Activated T-helper 1 cell treated with anti-CD3 and anti-CD28 coated beads, Interleukin-12 subunit alpha, Interleukin-12 subunit beta, Interleukin-2, Interleukin-4 antibody, amounts not matched to agents 30 ng/mL and 10 ng/mL and 1 ng/mL, durations not matched to agents 14 hours and 24 hours and 36 hours (primary cell): ENCODE measurements at regions of chr10 and their contacts with region 1.

Region 1: DNA sequence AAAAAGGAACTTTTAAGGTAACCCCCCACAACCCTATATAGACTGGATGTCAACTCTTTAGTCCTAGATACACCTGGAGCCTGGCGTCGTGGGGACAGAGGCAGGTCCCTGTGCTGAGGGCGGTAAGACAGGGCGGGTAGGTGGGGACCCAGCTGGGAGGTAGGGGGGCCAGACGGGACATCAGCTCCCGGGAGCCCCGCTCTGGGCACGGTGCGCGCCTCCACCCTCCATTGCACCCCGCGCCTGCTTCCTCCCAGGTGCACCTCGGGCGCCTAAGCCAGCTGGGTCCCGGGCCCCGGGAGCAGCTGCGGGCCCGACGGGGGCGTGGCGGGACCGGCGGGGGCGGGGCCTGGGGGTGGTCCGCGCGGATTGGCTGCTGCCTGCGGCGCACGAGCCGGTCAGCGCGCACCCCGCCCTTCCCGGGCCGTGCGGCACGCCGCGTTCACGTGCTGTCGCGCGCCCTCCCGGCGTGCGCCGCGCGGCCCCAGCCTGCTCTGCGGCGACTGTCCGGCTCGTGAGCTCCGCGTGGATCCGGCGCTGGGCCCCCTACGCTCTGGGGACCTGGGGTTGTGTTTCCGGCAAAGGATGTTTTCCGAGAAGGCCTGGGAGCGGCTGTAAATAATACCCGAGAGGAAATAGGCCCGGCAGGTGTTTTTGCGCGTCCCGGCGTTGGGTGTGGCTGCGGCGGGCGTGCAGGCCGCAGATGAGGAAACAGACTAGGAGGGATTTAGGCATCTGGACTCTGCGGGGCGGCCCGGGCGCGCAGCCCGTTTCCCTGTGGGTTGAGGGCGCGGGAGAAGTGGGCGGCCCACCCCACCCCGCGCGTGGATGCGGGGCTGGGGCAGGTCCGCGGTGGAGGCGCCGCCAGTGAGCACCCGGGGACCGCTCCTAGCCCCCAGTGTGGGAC is 39.1 kb upstream of the PFKFB3 start:
- DNase-seq: peak; percentile 88
- H3K4me3 Mint-ChIP-seq: peak overlapping the region; percentile 94
- H3K27ac Mint-ChIP-seq: peak overlapping the region; percentile 95
- H3K4me1 Mint-ChIP-seq: peaks cover 54% of the 10 kb centered on the region
- H3K27me3 Mint-ChIP-seq: no peaks in the 10 kb centered on the region

Region 2: DNA sequence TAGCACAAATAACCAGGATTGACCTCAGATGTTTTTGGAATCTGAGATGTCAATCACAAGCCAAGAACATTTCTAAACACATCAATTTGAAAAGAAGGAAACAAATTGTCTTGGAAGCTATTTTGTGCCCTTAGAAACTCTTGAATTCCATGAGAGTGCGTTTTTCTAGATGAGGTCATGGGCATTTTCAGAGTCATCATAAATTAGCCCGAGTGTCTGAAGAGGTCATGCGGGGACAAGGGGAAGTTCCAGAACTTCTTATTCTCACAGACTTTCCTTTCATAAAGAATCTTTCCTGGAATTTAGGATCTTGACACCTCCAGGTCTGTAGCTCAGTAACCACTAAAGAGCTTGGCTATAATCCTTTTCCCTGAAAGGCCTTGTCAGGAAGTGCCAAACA is 129.7 kb before region 1 on chr10:
- intact Hi-C with region 1: no loop called
- DNase-seq: no peak
- H3K4me3 Mint-ChIP-seq: no peak overlapping the region
- H3K27ac Mint-ChIP-seq: peak overlapping the region; percentile 53
- H3K4me1 Mint-ChIP-seq: peaks cover 79% of the 10 kb centered on the region
- H3K27me3 Mint-ChIP-seq: no peaks in the 10 kb centered on the region

Region 3: GRCh38 chr10:6128591-6129251 is 34.9 kb before region 1 on chr10:
- intact Hi-C with region 1: loop called (anchors 5 kb)
- DNase-seq: no peak
- H3K4me3 Mint-ChIP-seq: peak overlapping the region; percentile 67
- H3K27ac Mint-ChIP-seq: peak overlapping the region; percentile 92
- H3K4me1 Mint-ChIP-seq: peaks cover 40% of the 10 kb centered on the region
- H3K27me3 Mint-ChIP-seq: no peaks in the 10 kb centered on the region

Region 4: GRCh38 chr10:6136215-6137201 is 27.1 kb before region 1 on chr10:
- intact Hi-C with region 1: loop called (anchors 1 kb)
- DNase-seq: peak; percentile 43
- H3K4me3 Mint-ChIP-seq: peak overlapping the region; percentile 49
- H3K27ac Mint-ChIP-seq: peak overlapping the region; percentile 91
- H3K4me1 Mint-ChIP-seq: peaks cover 66% of the 10 kb centered on the region
- H3K27me3 Mint-ChIP-seq: peaks cover 9% of the 10 kb centered on the region

Region 5: DNA sequence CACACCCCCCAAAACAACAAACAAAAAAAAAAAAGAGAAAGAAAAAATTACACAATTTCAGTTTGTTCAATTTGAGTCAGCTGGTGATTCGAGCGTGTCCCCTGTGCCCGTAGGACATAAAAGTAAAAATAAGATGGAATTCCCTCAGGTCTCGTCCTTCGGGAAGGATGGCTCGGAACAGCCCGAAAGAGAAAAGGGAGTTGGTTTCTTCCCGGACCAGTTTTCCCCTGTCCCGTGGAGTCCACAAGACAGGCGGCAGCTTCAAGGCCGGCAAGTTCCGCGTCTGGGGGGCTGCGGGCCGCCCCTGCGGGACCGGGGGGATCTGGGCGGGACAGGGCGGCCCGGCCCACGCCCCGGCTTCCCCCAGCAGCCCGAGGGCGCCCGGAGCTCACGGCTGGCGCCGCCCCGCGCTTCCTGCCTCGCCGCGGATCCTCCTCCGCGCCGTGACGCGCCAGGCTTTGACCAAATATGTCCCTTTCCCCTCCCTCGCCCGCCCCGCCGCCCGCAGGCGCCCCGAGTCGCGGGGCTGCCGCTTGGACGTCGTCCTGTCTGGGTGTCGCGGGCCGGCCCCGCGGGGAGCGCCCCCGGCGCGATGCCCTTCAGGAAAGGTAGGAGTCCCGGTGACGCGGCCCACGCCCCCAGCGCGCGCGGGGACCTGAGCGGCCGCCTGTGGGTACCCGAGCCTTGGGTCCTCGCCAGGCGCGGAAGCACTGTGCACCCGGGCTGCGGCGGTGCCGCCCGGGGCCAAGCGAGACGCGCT is 19.0 kb before region 1 on chr10:
- intact Hi-C with region 1: loop called (anchors 1 kb)
- DNase-seq: peak; percentile 89
- H3K4me3 Mint-ChIP-seq: peak overlapping the region; percentile 85
- H3K27ac Mint-ChIP-seq: peak overlapping the region; percentile 86
- H3K4me1 Mint-ChIP-seq: peaks cover 82% of the 10 kb centered on the region
- H3K27me3 Mint-ChIP-seq: no peaks in the 10 kb centered on the region